Posterior cingulate gyrus (tissue), 11 donors: ENCODE measurements at regions of chr1 and their contacts with region 1.

Region 1: GRCh38 chr1:247576495-247576894 is 11.7 kb upstream of the OR2G2 start:
- DNase-seq: no peak

Region 2: GRCh38 chr1:247373721-247374141 is 202.8 kb before region 1 on chr1:
- intact Hi-C with region 1: loop called (anchors 10 kb)
- DNase-seq: peak in 7 of 10 donors; percentile 16 to 89 (median 52)

Region 3: DNA sequence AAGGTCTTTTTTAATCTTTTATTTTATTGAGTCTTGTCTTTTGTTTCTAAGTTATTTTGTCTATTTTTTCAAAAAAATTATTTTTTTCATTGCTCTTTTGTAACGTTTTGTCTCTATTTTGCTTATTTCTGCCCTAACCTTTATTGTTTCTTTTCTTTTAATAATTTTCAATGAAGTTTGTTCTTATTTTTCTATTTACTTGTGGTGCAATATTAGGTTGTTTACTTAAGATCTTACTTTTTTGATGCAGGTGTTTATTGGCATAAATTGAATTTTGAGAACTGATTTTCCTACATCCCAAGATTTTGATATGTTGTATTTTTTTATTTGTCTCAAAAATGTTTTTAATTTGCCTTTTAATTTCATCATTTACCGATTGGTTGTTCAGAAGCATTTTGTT is 108.7 kb after region 1 on chr1:
- intact Hi-C with region 1: no loop called
- DNase-seq: no peak